ENCODE measurements at regions of chr11 and their contacts with region 1.

Region 1: GRCh38 chr11:70191495-70192140 is 11.5 kb upstream of the FADD start:
- DNase-seq: peak; percentile 93

Region 2: DNA sequence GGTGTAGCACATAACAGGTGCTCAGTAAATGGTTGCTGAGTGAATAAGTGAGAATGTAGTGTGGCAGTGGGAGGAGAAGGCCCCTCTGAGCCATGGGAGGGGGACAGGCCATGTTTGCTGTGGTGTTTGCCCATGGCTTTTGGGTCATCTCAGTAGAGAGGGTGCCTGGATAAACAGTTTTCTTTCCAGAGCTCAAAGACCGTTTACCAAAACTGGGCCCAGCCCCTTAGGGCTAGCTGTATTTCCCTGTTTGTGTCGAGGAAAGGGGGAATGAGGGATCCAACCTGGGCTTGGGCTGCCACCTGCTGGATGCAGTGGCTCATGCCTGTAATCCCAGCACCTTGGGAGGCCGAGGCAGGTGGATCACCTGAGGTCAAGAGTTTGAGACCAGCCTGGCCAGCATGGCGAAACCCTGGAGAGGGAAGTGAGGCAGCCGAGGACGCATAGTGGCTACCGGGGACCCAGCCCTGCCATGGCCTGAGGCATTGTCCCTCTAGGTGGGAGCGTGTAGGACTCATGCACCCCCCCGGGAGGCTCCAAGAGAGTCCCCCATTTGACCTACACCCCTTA is 507.8 kb before region 1 on chr11:
- intact Hi-C with region 1: loop called (anchors 2 kb)
- DNase-seq: peak; percentile 51

Region 3: DNA sequence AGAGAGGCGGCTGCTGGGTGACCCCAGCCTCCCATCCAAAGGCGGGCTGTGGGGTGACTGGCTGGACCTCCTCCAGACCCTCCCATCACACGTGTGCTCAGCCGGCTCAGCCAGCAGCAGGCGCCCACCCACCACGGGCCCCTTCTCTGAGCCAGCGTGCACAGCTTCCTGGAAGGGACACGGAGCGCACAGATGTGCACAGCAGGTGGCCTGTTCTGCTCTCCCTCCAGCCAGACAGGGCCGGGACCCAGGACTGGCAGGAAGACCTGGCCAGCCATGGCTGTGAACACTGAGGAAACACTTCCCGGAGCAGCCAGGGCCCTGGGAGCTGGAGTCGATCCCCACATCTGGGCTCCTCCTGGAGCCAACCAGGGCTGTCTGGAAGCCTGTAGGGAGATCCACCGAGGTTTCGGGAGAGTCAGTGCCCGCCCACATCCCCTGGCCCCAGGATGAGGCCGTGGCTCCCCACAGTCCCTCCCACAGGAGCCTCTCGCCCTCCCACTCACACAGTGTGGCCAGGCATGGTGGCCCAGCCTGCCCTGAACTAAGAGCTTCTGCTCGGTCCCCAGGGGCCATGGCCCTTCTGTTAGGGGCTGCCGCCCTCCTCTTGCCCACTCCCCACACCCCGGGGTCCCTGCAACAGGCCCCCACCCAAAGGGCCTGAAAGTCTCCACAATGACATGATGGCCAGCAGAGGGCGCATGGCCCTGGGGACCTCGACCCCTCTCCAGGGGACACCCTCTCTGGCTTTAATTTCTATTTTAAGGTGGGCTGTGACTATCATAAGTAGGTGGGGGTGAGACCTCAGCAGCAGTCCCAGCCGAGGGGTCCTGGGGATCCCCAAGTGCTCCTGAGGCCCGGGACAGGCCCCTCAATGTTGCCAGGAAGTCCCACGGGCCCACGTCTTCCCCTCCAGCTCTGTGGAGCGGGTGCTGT is 281.8 kb before region 1 on chr11:
- intact Hi-C with region 1: loop called (anchors 2 kb)
- DNase-seq: peak; percentile 77

Region 4: DNA sequence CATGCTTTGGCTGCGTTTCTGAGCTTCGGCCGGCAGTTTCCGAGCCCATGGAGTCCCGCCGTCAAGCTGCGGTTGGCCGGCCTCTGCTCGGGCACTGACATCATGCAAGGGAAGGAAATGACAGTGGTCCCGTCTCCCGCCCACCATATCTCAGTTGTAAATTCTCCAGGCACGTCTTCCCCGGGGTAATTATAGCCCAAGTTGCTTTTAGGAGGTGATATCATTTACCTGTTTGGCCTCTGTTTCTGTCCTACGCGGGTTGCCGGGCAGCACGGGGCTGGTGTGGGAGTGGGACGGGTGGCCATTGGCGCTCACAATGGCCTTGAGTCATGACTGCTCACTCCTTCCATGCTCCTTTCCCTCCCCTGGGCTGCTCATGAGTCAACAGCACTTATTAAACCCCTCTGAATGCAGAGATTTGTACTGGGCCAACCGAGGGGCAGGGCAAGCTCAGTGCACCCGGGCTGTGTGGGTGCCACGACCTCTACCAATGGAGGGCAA is 117.7 kb before region 1 on chr11:
- intact Hi-C with region 1: no loop called
- DNase-seq: peak; percentile 76

Region 5: GRCh38 chr11:70202898-70203748 is 11.5 kb after region 1 on chr11 and contains the start of gene FADD:
- intact Hi-C with region 1: no loop called
- DNase-seq: peak; percentile 97
- total RNA-seq, gene FADD: 15.8 to 19.4 TPM

Measured in posterior vena cava (tissue), 2 donors.